Activated T-helper 1 cell treated with anti-CD3 and anti-CD28 coated beads, Interleukin-12 subunit alpha, Interleukin-12 subunit beta, Interleukin-2, Interleukin-4 antibody, amounts not matched to agents 30 ng/mL and 10 ng/mL and 1 ng/mL, durations not matched to agents 14 hours and 24 hours and 36 hours (primary cell): ENCODE measurements at regions of chr14 and their contacts with region 1.

Region 1: GRCh38 chr14:35046048-35046741 is at the start of gene FAM177A1:
- DNase-seq: peak; percentile 96
- H3K4me3 Mint-ChIP-seq: peak within 1 kb of the TSS; percentile 97
- H3K27ac Mint-ChIP-seq: peak within 1 kb of the TSS; percentile 99
- H3K4me1 Mint-ChIP-seq: peaks cover 32% of the 10 kb centered on the region
- H3K27me3 Mint-ChIP-seq: no peaks in the 10 kb centered on the region
- total RNA-seq, gene FAM177A1: 43.2 and 46.3 TPM in 2 replicates

Region 2: GRCh38 chr14:34629657-34630529 is 416.3 kb before region 1 on chr14 and contains the start of gene SNX6:
- intact Hi-C with region 1: loop called (anchors 1 kb)
- DNase-seq: peak; percentile 76
- H3K4me3 Mint-ChIP-seq: peak within 1 kb of the TSS; percentile 95
- H3K27ac Mint-ChIP-seq: peak within 1 kb of the TSS; percentile 99
- H3K4me1 Mint-ChIP-seq: peaks cover 8% of the 10 kb centered on the region
- H3K27me3 Mint-ChIP-seq: peaks cover 11% of the 10 kb centered on the region
- total RNA-seq, gene SNX6: 70.3 and 75.6 TPM in 2 replicates

Region 3: GRCh38 chr14:34931206-34931605 is 115.0 kb before region 1 on chr14:
- intact Hi-C with region 1: loop called (anchors 2 kb)
- DNase-seq: peak; percentile 10
- H3K4me3 Mint-ChIP-seq: peak overlapping the region; percentile 59
- H3K27ac Mint-ChIP-seq: peak overlapping the region; percentile 81
- H3K4me1 Mint-ChIP-seq: peaks cover 35% of the 10 kb centered on the region
- H3K27me3 Mint-ChIP-seq: no peaks in the 10 kb centered on the region

Region 4: GRCh38 chr14:35034440-35034833 is 11.8 kb before region 1 on chr14:
- intact Hi-C with region 1: no loop called
- DNase-seq: no peak
- H3K4me3 Mint-ChIP-seq: no peak overlapping the region
- H3K27ac Mint-ChIP-seq: no peak overlapping the region
- H3K4me1 Mint-ChIP-seq: no peaks in the 10 kb centered on the region
- H3K27me3 Mint-ChIP-seq: no peaks in the 10 kb centered on the region

Region 5: DNA sequence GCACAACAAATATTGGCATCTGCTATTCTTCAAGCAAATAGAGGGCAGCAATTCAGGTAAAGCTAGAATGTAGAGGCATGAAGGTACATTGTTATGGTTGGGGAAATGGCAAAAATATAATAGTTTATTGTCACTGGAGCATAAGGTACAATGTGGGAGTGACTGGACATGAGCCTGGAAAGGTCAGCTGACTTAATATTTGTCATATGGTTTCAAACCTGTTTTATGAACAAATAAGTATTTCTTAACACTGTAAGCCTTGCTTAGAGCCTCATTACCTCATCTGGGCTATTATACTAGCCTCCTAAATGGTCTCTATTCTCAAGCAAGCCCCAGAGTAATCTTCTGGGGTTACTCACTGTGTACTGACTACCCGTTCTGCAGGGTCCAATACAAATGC is 33.5 kb after region 1 on chr14:
- intact Hi-C with region 1: no loop called
- DNase-seq: no peak
- H3K4me3 Mint-ChIP-seq: no peak overlapping the region
- H3K27ac Mint-ChIP-seq: no peak overlapping the region
- H3K4me1 Mint-ChIP-seq: no peaks in the 10 kb centered on the region
- H3K27me3 Mint-ChIP-seq: no peaks in the 10 kb centered on the region

Region 6: DNA sequence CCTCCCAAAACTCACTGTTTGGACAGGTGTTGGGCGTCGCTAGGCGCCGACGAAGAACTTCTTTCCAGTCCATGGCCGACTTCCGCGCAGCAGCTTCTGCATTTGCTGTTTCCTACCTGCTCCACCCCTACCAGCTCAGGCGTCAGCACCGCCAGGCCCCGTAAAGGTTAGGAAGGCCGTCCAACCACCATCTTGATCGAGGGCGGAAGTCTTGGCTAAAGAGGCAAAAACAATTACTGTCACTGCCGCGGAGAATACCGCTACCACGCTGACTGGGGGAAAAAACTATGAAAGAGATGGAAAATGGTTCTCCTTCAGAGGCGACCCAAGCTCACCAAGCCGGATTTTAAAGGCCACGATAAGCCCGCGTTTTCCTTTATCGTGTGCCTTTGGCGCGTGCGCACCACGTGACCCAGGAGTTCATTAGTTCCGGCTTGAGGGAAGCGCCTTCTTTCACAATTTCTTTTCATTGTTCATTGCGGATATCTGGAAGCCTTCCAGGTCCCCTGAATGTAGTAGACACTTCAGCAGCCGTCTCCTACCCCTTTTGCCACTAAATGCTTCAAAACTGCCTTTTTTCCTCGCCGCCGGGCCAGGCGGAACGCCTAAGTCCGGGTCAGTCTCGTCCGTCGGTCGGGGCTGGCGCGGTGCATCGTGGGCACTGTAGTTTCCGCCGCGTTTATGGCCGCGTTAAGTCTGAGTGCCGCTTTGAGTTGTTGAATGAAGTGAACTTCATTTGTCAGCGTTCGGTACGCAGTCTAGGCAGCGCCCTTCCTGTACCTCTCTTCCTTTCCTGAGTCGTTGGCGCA is 75.9 kb after region 1 on chr14 and contains the starts of genes PPP2R3C and PRORP:
- intact Hi-C with region 1: loop called (anchors 1 kb)
- DNase-seq: peak; percentile 88
- H3K4me3 Mint-ChIP-seq: peak within 1 kb of the TSS; percentile 97
- H3K27ac Mint-ChIP-seq: peak within 1 kb of the TSS; percentile 100
- H3K4me1 Mint-ChIP-seq: peaks cover 61% of the 10 kb centered on the region
- H3K27me3 Mint-ChIP-seq: no peaks in the 10 kb centered on the region
- total RNA-seq, gene PPP2R3C: 48.2 and 52.4 TPM in 2 replicates
- total RNA-seq, gene PRORP: 34.1 and 38.0 TPM in 2 replicates

Region 7: GRCh38 chr14:35808076-35808652 is 762.0 kb after region 1 on chr14:
- intact Hi-C with region 1: loop called (anchors 2 kb)
- DNase-seq: no peak
- H3K4me3 Mint-ChIP-seq: peak overlapping the region; percentile 100
- H3K27ac Mint-ChIP-seq: peak overlapping the region; percentile 97
- H3K4me1 Mint-ChIP-seq: peaks cover 29% of the 10 kb centered on the region
- H3K27me3 Mint-ChIP-seq: peaks cover 3% of the 10 kb centered on the region